ENCODE measurements at regions of chr10 and their contacts with region 1.

Region 1: GRCh38 chr10:77173615-77174461 is 463.8 kb downstream of the KCNMA1 start:
- DNase-seq: peak; percentile 62
- H3K4me3 ChIP-seq: no peak overlapping the region
- H3K27ac ChIP-seq: no peak overlapping the region
- H3K4me1 ChIP-seq: peaks cover 7% of the 10 kb centered on the region
- H3K27me3 ChIP-seq: no peaks in the 10 kb centered on the region
- CTCF ChIP-seq: peak; percentile 93 to 95

Region 2: DNA sequence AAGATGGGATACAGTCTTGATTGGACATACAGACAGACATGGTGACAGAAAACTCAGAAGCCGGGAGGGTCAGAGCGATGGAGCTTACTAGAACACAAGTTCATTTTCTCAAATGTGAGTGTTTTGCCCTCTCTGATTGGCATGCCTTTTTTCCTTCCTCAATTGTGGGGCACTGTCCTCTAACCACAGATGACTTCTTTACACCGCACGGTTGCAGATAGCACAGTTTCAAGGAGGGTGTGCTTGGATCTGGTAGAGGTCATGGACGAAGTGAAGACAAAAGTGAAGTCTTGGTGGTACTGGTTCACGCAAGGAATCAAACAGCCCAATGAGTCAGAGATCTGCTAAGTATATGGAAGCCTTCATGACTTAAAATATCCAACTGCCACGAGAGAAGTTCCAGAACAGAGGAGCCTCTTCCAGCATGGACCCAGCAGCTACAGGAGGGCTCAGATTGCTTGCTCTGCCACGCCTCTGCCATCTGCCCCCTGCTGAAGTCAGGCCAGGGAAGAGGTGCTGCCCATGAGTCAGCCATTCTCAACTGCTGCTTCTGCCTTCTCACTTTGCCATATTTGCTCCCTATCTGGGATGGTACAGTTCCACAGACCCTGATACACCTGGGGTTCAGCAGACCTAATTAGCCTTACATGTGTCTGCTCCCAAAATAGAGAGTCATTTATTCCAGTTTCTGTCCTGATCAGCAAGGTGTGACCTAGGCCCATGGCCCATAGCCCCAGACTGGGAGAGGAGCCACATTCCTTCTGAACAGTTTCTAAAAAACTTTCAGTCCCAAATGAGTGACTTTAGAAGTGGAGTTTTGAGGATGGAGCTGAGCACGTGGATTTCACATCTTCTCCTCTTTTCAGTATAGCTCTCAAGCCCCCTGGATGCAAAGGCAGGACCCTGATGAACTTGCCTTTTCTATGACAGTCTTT is 50.0 kb after region 1 on chr10:
- CTCF ChIA-PET with region 1: no interaction called
- dilution Hi-C with region 1: no loop called
- in situ Hi-C with region 1: no loop called
- intact Hi-C with region 1: no loop called
- DNase-seq: no peak
- H3K4me3 ChIP-seq: no peak overlapping the region
- H3K27ac ChIP-seq: no peak overlapping the region
- H3K4me1 ChIP-seq: peaks cover 4% of the 10 kb centered on the region
- H3K27me3 ChIP-seq: no peaks in the 10 kb centered on the region
- CTCF ChIP-seq: no peak

Region 3: GRCh38 chr10:77251297-77252013 is 77.6 kb after region 1 on chr10:
- CTCF ChIA-PET with region 1: no interaction called
- dilution Hi-C with region 1: no loop called
- in situ Hi-C with region 1: no loop called
- intact Hi-C with region 1: loop called (anchors 1 kb)
- DNase-seq: peak; percentile 29
- H3K4me3 ChIP-seq: no peak overlapping the region
- H3K27ac ChIP-seq: no peak overlapping the region
- H3K4me1 ChIP-seq: peaks cover 10% of the 10 kb centered on the region
- H3K27me3 ChIP-seq: no peaks in the 10 kb centered on the region
- CTCF ChIP-seq: peak; percentile 67 to 77

Region 4: GRCh38 chr10:77513781-77514331 is 340.0 kb after region 1 on chr10:
- CTCF ChIA-PET with region 1: no interaction called
- dilution Hi-C with region 1: loop called (anchors 25 kb)
- in situ Hi-C with region 1: no loop called
- intact Hi-C with region 1: no loop called
- DNase-seq: peak; percentile 92
- H3K4me3 ChIP-seq: peak overlapping the region in 1 of 3 experiments; percentile 7
- H3K27ac ChIP-seq: peak overlapping the region; percentile 56
- H3K4me1 ChIP-seq: peaks cover 48% of the 10 kb centered on the region
- H3K27me3 ChIP-seq: no peaks in the 10 kb centered on the region
- CTCF ChIP-seq: no peak

Region 5: DNA sequence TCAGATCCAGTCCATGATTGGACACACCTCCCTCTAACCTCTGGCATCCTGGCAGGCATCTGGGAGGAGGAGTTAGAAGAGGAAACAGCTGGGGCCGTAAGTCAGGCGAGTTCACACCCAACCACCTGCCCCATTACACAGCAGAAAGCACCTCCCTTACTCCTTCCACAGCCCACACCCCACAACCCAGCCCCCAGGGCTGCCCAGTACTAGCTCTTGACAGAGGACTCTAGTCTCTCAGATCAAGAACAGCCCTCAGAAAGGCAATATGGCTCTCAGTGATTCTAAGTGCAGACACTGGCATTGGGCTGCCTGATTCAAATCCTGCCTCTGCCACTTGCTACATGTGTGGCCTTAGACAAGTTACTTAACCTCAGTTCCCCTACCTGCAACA is 429.7 kb after region 1 on chr10:
- CTCF ChIA-PET with region 1: no interaction called
- dilution Hi-C with region 1: no loop called
- in situ Hi-C with region 1: no loop called
- intact Hi-C with region 1: loop called (anchors 1 kb)
- DNase-seq: no peak
- H3K4me3 ChIP-seq: no peak overlapping the region
- H3K27ac ChIP-seq: no peak overlapping the region
- H3K4me1 ChIP-seq: peaks cover 44% of the 10 kb centered on the region
- H3K27me3 ChIP-seq: no peaks in the 10 kb centered on the region
- CTCF ChIP-seq: no peak